Adrenal gland (tissue), 19 donors: ENCODE measurements at regions of chr13 and their contacts with region 1.

Region 1: GRCh38 chr13:97344265-97345175 is 89.4 kb upstream of the RAP2A start:
- DNase-seq: peak; percentile 55 to 95 (median 68)
- H3K4me3 ChIP-seq: no peak overlapping the region
- H3K27ac ChIP-seq: peak overlapping the region in 3 of 5 donors; percentile 6 to 68 (median 41)
- H3K4me1 ChIP-seq: peaks cover 9 to 43% of the 10 kb centered on the region in 2 donors
- H3K27me3 ChIP-seq: no peaks in the 10 kb centered on the region
- CTCF ChIP-seq: peak; percentile 46 to 82 (median 66)
- POLR2A ChIP-seq: no peak

Region 2: GRCh38 chr13:97109841-97110492 is 234.6 kb before region 1 on chr13:
- intact Hi-C with region 1: loop called (anchors 5 kb)
- DNase-seq: peak; percentile 95 to 98 (median 96)
- H3K4me3 ChIP-seq: peak overlapping the region in 1 of 4 donors; percentile 16
- H3K27ac ChIP-seq: peak overlapping the region in 4 of 5 donors; percentile 10 to 61 (median 30)
- H3K4me1 ChIP-seq: peaks cover 9 to 38% of the 10 kb centered on the region in 2 donors
- H3K27me3 ChIP-seq: no peaks in the 10 kb centered on the region
- CTCF ChIP-seq: peak; percentile 91 to 98 (median 96)
- POLR2A ChIP-seq: peak in 1 of 2 donors; percentile 29

Region 3: GRCh38 chr13:97261254-97262005 is 83.1 kb before region 1 on chr13:
- intact Hi-C with region 1: loop called (anchors 10 kb)
- DNase-seq: peak in 6 of 7 donors; percentile 54 to 78 (median 66)
- H3K4me3 ChIP-seq: no peak overlapping the region
- H3K27ac ChIP-seq: peak overlapping the region; percentile 80 to 95 (median 87)
- H3K4me1 ChIP-seq: peaks cover 79 to 94% of the 10 kb centered on the region in 2 donors
- H3K27me3 ChIP-seq: no peaks in the 10 kb centered on the region
- CTCF ChIP-seq: no peak
- POLR2A ChIP-seq: peak in 1 of 2 donors; percentile 43